Colonic mucosa (tissue), 4 donors: ENCODE measurements at regions of chr14 and their contacts with region 1.

Region 1: DNA sequence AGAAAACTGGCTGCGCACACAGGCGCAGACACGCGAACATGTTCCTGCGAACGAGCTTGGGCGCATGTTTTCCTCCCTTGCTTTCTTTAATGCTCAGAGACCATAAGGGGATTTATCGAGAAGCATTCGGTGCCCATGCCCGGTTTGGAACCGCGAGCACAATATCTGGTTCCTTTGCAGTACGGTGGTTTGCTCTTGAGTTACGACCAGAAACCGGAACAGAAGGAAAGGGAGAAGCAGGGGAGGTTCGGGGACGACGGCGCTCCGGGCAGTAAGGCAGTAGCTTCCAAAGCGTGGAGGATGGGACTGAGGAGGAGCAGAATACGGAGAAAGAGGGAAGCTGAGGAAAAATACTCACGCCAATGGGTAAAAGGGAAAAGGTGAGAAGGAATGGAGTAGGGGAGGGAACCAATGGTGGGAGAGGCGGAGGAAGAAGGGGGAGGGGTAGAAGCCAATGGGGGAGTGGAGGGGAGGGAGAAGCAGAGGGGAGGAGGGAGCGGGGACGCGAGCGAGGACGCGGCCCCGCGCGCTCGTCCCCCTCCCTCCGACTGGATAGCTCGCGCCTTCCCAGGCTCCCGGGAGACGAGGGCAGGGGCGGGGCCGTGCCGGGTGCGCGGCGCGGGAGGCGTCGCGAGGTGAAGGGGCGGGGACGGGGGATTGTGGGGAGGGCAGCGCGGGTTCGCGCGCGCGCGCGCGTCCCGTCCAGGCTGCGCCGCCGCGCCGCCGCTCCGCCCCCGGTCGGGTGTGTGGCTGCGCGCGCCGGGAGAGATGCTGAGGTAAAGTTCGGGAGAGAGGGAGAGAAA is 625 bp upstream of the ARHGAP5 start:
- DNase-seq: peak; percentile 97
- H3K4me3 ChIP-seq: peak overlapping the region; percentile 85
- H3K27ac ChIP-seq: peak overlapping the region; percentile 99
- H3K4me1 ChIP-seq: no peaks in the 10 kb centered on the region
- H3K27me3 ChIP-seq: no peaks in the 10 kb centered on the region
- CTCF ChIP-seq: no peak

Region 2: GRCh38 chr14:31858868-31859267 is 217.6 kb before region 1 on chr14:
- intact Hi-C with region 1: no loop called
- DNase-seq: no peak
- H3K4me3 ChIP-seq: no peak overlapping the region
- H3K27ac ChIP-seq: no peak overlapping the region
- H3K4me1 ChIP-seq: no peaks in the 10 kb centered on the region
- H3K27me3 ChIP-seq: no peaks in the 10 kb centered on the region
- CTCF ChIP-seq: no peak

Region 3: DNA sequence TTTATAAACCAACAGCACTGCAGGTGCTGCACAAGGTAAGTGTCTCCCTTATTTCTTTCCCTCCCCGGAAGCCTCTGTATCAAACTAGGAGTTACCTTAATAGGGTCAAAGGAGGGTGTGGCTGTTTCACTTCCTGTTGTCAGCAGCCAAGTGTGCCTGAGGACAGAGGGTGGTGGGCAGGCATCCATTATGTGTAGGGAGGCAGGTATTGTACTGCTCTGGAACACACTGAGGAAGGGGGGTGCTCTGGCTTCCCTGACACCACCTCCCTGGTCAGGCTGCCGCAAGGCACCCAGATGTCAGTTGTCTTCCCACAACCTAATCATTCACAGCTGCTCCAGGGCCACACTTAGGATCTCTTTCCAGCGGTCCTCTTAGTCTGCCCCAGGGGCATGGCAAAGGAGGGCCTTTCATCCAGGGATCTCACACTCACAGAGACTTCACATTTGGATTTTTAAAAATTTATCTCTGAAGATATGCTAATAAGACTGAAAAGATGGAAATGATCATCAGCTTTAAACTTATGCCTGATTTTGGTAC is 131.3 kb before region 1 on chr14:
- intact Hi-C with region 1: loop called (anchors 10 kb)
- DNase-seq: peak; percentile 70
- H3K4me3 ChIP-seq: no peak overlapping the region
- H3K27ac ChIP-seq: peak overlapping the region; percentile 83
- H3K4me1 ChIP-seq: peaks cover 11% of the 10 kb centered on the region
- H3K27me3 ChIP-seq: no peaks in the 10 kb centered on the region
- CTCF ChIP-seq: no peak

Region 4: GRCh38 chr14:32028599-32028998 is 47.9 kb before region 1 on chr14:
- intact Hi-C with region 1: no loop called
- DNase-seq: no peak
- H3K4me3 ChIP-seq: no peak overlapping the region
- H3K27ac ChIP-seq: no peak overlapping the region
- H3K4me1 ChIP-seq: no peaks in the 10 kb centered on the region
- H3K27me3 ChIP-seq: no peaks in the 10 kb centered on the region
- CTCF ChIP-seq: no peak

Region 5: DNA sequence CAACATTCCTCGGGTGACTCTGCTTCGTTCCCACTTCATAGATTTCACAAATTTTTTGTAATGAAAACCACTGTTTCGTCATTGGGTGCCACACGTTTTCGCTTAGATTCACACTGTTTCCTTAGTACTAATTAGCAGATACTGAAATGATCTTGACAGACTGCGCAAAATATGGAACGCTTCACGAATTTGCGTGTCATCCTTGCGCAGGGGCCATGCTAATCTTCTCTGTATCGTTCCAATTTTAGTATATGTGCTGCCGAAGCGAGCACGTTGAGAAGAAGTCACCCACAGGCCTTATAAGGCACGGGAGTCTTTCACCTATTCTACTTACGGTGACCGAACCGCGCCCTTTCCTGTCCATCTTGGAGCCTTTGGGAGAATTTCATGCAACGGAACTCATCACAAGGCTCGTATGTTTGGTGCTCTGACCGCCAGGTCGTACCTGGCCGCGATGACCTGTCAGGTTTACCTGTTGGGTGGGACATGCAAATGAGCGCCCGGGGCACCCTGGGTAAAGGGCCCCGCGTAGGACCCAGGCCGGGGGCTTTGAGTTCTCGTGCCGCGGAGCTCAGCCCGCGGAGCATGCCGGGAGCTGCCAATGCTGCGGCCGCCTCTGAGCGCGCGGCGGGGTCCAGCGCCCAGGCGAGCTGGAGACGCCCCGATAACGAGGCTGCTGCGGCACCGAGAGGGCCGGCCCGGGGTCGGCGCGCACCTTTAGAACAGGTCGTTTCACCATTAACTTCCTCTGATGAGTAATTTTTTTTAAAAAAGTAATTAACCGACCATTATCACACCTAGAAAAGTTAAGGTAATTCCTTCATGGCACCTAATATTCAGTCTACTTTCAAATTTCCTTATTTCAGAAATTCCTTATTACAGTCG is 126.8 kb after region 1 on chr14 and contains the start of gene RNU6-8:
- intact Hi-C with region 1: loop called (anchors 5 kb)
- DNase-seq: peak; percentile 87
- H3K4me3 ChIP-seq: peak within 1 kb of the TSS; percentile 46
- H3K27ac ChIP-seq: peak within 1 kb of the TSS; percentile 35
- H3K4me1 ChIP-seq: peaks cover 3% of the 10 kb centered on the region
- H3K27me3 ChIP-seq: no peaks in the 10 kb centered on the region
- CTCF ChIP-seq: no peak
- total RNA-seq, gene RNU6-8: not detected